Left ventricle myocardium inferior (tissue), 1 donor: ENCODE measurements at regions of chr11 and their contacts with region 1.

Region 1: GRCh38 chr11:65720237-65720934 is at the start of gene RNASEH2C:
- DNase-seq: peak; percentile 88
- H3K4me3 ChIP-seq: peak within 1 kb of the TSS; percentile 90
- H3K27ac ChIP-seq: peak within 1 kb of the TSS; percentile 97
- H3K4me1 ChIP-seq: peaks cover 35% of the 10 kb centered on the region
- H3K27me3 ChIP-seq: no peaks in the 10 kb centered on the region
- CTCF ChIP-seq: no peak
- total RNA-seq, gene RNASEH2C: 39.7 TPM

Region 2: DNA sequence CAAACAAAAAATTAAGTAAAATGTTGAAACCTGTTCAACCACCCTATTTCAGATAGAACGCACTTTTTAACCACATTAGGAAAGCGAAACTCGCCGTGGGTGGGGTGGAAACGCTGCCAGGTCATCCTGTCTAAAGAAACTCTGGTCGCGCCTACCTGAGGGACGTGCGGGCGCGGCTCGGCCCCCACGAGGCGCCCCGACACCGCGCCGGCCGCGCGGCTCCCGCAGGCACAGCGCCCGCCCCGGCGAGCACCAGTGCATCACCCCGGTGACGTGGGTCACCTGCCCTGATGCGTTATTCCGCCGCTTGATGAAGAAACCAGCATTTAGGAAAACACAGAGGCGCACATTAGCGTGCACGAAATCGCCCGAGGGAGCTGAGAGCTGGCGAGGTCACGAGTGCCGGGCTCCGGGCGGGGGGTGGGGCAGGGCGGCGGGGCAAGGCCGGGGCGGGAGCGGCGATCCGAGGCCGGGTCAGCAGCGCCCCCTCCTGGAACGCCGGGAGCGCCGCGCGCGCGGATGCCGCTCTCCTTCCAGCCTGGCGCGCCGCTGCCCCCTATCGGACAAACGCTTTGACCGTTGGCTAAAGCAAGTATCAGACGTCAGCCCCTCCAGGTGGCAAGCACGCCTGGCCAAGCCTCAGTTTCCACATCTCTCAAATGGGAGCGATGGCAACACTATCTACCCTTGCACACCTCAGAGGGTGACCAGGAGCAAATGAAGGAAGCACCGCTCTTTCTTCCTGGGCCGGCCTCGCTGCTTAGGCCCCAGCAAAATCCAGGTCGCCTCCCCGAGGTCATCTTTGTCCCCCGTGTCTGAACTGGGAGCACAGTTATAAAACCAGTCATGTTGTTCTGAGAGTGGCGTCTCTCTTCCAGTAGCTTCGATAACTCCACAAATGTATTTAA is 97.7 kb after region 1 on chr11:
- intact Hi-C with region 1: loop called (anchors 10 kb)
- DNase-seq: peak; percentile 96
- H3K4me3 ChIP-seq: peak overlapping the region; percentile 84
- H3K27ac ChIP-seq: peak overlapping the region; percentile 77
- H3K4me1 ChIP-seq: peaks cover 12% of the 10 kb centered on the region
- H3K27me3 ChIP-seq: no peaks in the 10 kb centered on the region
- CTCF ChIP-seq: peak; percentile 100